Posterior cingulate gyrus (tissue), 11 donors: ENCODE measurements at regions of chr2 and their contacts with region 1.

Region 1: GRCh38 chr2:142980561-142981378 is 103.3 kb downstream of the KYNU start:
- DNase-seq: no peak

Region 2: DNA sequence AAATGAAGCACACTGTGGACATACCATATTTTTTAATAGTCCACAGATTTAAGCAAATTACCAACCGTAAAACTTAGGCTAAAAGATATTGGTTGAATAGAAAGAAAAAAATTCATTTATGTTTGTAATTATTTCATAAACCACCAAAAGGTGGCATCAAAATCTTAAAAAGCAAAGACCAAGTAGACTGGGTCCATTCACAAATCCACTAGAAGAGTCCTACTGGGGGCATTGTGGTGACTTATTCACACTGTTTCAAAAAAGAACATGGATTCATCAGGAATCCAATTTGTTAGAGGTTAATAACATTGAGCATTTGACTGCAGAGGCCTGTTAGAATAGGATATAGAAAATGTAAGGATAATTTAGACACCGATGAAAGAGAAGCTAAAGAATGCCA is 298.2 kb before region 1 on chr2:
- intact Hi-C with region 1: loop called (anchors 1 kb)
- DNase-seq: no peak